HCT116 (cell line): ENCODE measurements at regions of chr12 and their contacts with region 1.

Region 1: GRCh38 chr12:59149997-59150642 is 229.8 kb upstream of the LRIG3 start:
- DNase-seq: peak; percentile 79
- ATAC-seq: peak; percentile 98
- H3K4me3 ChIP-seq: no peak overlapping the region
- H3K27ac ChIP-seq: no peak overlapping the region
- H3K4me1 ChIP-seq: no peaks in the 10 kb centered on the region
- H3K27me3 ChIP-seq: no peaks in the 10 kb centered on the region
- CTCF ChIP-seq: peak; percentile 92 to 100 (median 98)
- POLR2A ChIP-seq: no peak
- RAD21 ChIP-seq: peak; percentile 94

Region 2: GRCh38 chr12:58346032-58346632 is 804.0 kb before region 1 on chr12:
- CTCF ChIA-PET with region 1: no interaction called
- POLR2A ChIA-PET with region 1: no interaction called
- RAD21 ChIA-PET with region 1: no interaction called
- intact Hi-C with region 1: loop called (anchors 1 kb)
- DNase-seq: peak; percentile 12
- ATAC-seq: peak; percentile 77
- H3K4me3 ChIP-seq: no peak overlapping the region
- H3K27ac ChIP-seq: no peak overlapping the region
- H3K4me1 ChIP-seq: no peaks in the 10 kb centered on the region
- H3K27me3 ChIP-seq: no peaks in the 10 kb centered on the region
- CTCF ChIP-seq: peak; percentile 70 to 79 (median 78)
- POLR2A ChIP-seq: no peak
- RAD21 ChIP-seq: peak; percentile 77

Region 3: DNA sequence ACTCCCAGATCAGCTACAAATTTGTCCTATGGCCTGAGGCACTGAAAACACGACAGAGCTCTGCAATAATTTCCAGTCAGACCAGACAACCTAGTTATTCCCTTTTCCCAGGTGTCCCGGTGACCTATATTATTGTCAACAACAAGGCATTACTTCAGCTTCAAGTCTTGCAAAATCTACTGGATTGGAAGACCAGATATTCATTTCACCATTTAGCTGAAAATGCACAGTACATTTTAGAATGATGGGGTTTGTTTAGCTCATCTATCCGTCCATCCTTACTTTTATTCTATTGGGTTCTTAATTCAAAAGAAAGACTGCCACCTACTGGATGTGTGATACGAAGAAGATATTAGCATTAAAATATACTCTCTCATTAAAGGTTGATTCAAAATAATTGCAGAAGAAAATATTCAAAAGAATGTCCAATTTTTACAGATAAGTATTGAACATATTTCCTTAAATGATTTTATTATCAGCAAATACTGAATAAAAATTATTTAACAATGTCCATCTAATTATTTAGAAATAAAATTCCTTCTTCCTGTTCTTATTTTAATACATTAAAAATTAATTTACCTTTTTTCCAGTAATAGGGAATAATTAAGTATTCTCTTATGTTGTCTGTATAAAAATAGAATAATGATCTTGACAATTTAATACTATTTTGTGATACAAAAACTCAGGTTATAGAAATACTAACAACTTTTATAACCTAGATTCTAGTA is 15.0 kb after region 1 on chr12:
- CTCF ChIA-PET with region 1: interaction called, 36 read pairs
- POLR2A ChIA-PET with region 1: no interaction called
- RAD21 ChIA-PET with region 1: no interaction called
- intact Hi-C with region 1: no loop called
- DNase-seq: peak; percentile 16
- ATAC-seq: peak; percentile 61
- H3K4me3 ChIP-seq: no peak overlapping the region
- H3K27ac ChIP-seq: no peak overlapping the region
- H3K4me1 ChIP-seq: no peaks in the 10 kb centered on the region
- H3K27me3 ChIP-seq: no peaks in the 10 kb centered on the region
- CTCF ChIP-seq: peak; percentile 40 to 69 (median 46); a peak in 5 of 6 replicates
- POLR2A ChIP-seq: no peak
- RAD21 ChIP-seq: peak; percentile 49

Region 4: GRCh38 chr12:59193476-59194050 is 43.4 kb after region 1 on chr12:
- CTCF ChIA-PET with region 1: no interaction called
- POLR2A ChIA-PET with region 1: no interaction called
- RAD21 ChIA-PET with region 1: no interaction called
- intact Hi-C with region 1: no loop called
- DNase-seq: no peak
- ATAC-seq: no peak
- H3K4me3 ChIP-seq: no peak overlapping the region
- H3K27ac ChIP-seq: no peak overlapping the region
- H3K4me1 ChIP-seq: no peaks in the 10 kb centered on the region
- H3K27me3 ChIP-seq: no peaks in the 10 kb centered on the region
- CTCF ChIP-seq: no peak
- POLR2A ChIP-seq: no peak
- RAD21 ChIP-seq: no peak